Naive thymus-derived CD4-positive, alpha-beta T cell (primary cell): ENCODE measurements at regions of chr22 and their contacts with region 1.

Region 1: DNA sequence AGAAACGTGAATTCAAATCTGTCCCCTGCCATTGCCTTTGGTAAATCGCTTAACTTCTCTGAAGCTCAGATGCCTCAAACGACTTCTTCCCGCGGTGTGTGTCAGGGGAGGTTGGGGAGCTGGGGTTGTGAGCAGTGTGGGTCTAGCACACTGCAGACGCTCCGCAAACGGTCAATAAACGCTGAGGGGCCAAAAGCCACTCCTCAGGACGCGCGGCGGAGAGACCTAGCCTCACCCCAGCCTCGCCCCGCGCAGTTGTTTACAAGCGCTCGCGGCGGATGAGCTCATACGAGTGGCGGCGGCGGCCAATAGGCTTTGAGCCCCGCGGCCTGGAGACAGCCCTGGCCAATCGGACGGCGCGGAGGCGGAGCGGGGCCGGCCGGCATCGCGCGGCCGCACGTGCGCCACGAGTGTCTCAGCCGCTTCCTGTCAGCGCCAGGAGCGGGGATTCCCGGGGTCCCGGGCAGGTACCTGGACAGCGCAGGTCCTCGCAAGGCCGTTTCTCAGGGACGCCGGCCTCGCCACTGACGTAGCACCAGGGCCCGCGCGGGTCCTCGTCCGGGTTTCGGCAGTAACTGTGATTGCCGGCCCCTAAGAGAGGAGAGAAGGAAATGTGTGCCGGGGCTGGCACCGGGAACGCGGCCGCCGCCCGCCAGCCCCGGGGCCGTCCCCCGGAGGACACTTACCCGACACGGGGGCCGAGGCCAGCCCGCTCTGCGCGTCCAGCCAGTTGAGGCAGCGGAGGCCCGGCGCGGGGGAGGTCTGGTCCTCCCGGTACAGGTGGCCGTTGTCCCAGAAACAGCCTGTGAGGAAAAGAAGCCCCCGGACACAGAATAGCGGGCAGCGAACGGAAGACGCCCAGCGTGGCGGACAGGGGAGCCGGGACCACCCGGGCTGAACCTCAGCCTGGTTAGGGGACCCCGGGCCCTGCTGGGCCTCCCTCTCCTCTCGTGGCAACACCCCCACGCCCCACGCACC is 1.5 kb downstream of the PIK3IP1 start:
- DNase-seq: peak; percentile 94 to 98 (median 97)
- ATAC-seq: peak; percentile 86
- H3K4me3 ChIP-seq: peak overlapping the region; percentile 100
- H3K4me3 Mint-ChIP-seq: peak overlapping the region; percentile 92 to 100 (median 98)
- H3K27ac ChIP-seq: peak overlapping the region; percentile 100
- H3K27ac Mint-ChIP-seq: peak overlapping the region; percentile 98 to 100 (median 99)
- H3K4me1 ChIP-seq: peaks cover 53 to 54% of the 10 kb centered on the region in 2 donors
- H3K4me1 Mint-ChIP-seq: peaks cover 24 to 65% (median 60%) of the 10 kb centered on the region in 7 donors
- H3K27me3 ChIP-seq: no peaks in the 10 kb centered on the region
- H3K27me3 Mint-ChIP-seq: no peaks in the 10 kb centered on the region

Region 2: GRCh38 chr22:30930228-30930627 is 360.6 kb before region 1 on chr22:
- CTCF ChIA-PET with region 1: no interaction called
- POLR2A ChIA-PET with region 1: no interaction called
- intact Hi-C with region 1: no loop called
- DNase-seq: no peak
- ATAC-seq: no peak
- H3K4me3 ChIP-seq: no peak overlapping the region
- H3K4me3 Mint-ChIP-seq: no peak overlapping the region
- H3K27ac ChIP-seq: peak overlapping the region; percentile 23
- H3K27ac Mint-ChIP-seq: peak overlapping the region in 7 of 9 donors; percentile 46 to 93 (median 86)
- H3K4me1 ChIP-seq: peaks cover 0 to 11% of the 10 kb centered on the region in 2 donors
- H3K4me1 Mint-ChIP-seq: peaks cover 0 to 50% (median 41%) of the 10 kb centered on the region in 7 donors
- H3K27me3 ChIP-seq: no peaks in the 10 kb centered on the region
- H3K27me3 Mint-ChIP-seq: no peaks in the 10 kb centered on the region

Region 3: DNA sequence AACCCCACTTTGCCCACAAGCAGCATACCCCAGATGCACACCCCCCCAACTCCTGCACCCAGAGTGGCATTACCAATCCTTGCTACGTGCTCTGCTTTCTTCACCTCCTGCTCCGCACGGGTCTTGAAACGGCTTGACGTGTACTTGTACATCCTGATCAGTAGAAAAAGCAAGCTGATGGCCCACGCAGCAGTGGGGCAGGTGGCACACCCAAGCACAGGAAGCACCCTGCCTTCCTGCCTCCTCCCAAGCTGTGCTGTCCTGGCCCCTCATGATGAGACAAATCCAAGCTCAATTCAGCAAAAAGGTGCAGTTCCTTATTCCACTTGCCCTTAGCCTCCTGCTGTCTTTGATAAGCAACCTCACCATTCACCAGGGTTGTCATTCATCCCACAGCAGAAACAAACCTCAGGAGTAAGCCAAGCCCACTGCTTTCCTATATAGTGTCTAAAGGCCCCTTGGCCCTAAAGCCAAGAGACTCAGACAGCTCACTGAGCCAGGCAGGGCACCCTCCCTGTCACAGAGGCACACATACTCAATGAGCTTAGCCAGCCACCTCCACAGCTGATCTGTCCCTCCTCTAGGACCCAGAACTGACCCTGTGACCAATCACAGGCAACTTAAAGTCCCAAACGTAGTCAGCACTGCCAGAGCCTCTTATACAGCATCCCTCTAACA is 350.0 kb before region 1 on chr22:
- CTCF ChIA-PET with region 1: no interaction called
- POLR2A ChIA-PET with region 1: interaction called, 29 read pairs
- intact Hi-C with region 1: no loop called
- DNase-seq: peak in 7 of 9 donors; percentile 52 to 72 (median 64)
- ATAC-seq: peak; percentile 74
- H3K4me3 ChIP-seq: peak overlapping the region; percentile 67
- H3K4me3 Mint-ChIP-seq: peak overlapping the region; percentile 81 to 95 (median 88)
- H3K27ac ChIP-seq: peak overlapping the region; percentile 78
- H3K27ac Mint-ChIP-seq: peak overlapping the region; percentile 85 to 97 (median 94)
- H3K4me1 ChIP-seq: peaks cover 43 to 93% of the 10 kb centered on the region in 2 donors
- H3K4me1 Mint-ChIP-seq: peaks cover 53 to 97% (median 93%) of the 10 kb centered on the region in 7 donors
- H3K27me3 ChIP-seq: no peaks in the 10 kb centered on the region
- H3K27me3 Mint-ChIP-seq: no peaks in the 10 kb centered on the region

Region 4: GRCh38 chr22:31107178-31107893 is 183.4 kb before region 1 on chr22 and contains the start of gene SELENOM:
- CTCF ChIA-PET with region 1: no interaction called
- POLR2A ChIA-PET with region 1: interaction called, 10 read pairs
- intact Hi-C with region 1: loop called in 1 of 2 experiments (anchors 5 kb)
- DNase-seq: peak; percentile 73 to 89 (median 84)
- ATAC-seq: peak; percentile 98
- H3K4me3 ChIP-seq: peak within 1 kb of the TSS; percentile 94
- H3K4me3 Mint-ChIP-seq: peak within 1 kb of the TSS; percentile 88 to 98 (median 93)
- H3K27ac ChIP-seq: peak within 1 kb of the TSS; percentile 86
- H3K27ac Mint-ChIP-seq: peak within 1 kb of the TSS; percentile 81 to 96 (median 90)
- H3K4me1 ChIP-seq: peaks cover 8 to 16% of the 10 kb centered on the region in 2 donors
- H3K4me1 Mint-ChIP-seq: peaks cover 12 to 26% (median 20%) of the 10 kb centered on the region in 7 donors
- H3K27me3 ChIP-seq: no peaks in the 10 kb centered on the region
- H3K27me3 Mint-ChIP-seq: peaks cover 0 to 3% (median 0%) of the 10 kb centered on the region in 5 donors
- total RNA-seq, gene SELENOM: 9.1 to 71.5 (median 68.6) TPM

Region 5: DNA sequence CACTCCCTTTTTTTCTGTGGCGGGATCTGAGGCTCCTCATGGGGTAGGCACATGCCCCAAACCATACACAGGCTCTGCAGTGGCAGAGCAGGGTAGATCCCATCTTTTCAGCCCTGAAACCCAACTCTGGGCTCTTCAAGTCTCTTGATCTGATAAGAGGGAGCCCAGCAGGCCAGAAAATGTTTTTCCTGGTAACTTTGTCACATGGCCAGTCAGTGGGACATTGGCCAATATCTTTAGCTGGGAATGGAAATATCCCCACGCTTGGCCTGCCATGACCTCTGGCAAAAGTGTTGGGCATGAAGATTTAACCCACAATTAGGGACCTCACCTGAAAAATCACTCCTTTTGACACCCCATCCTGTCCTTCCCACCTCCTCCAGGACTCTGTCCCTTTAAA is 159.9 kb before region 1 on chr22:
- CTCF ChIA-PET with region 1: no interaction called
- POLR2A ChIA-PET with region 1: no interaction called
- intact Hi-C with region 1: no loop called
- DNase-seq: no peak
- ATAC-seq: no peak
- H3K4me3 ChIP-seq: no peak overlapping the region
- H3K4me3 Mint-ChIP-seq: no peak overlapping the region
- H3K27ac ChIP-seq: no peak overlapping the region
- H3K27ac Mint-ChIP-seq: no peak overlapping the region
- H3K4me1 ChIP-seq: no peaks in the 10 kb centered on the region
- H3K4me1 Mint-ChIP-seq: peaks cover 0 to 4% (median 0%) of the 10 kb centered on the region in 7 donors
- H3K27me3 ChIP-seq: no peaks in the 10 kb centered on the region
- H3K27me3 Mint-ChIP-seq: peaks cover 0 to 5% (median 0%) of the 10 kb centered on the region in 5 donors

Region 6: GRCh38 chr22:31218565-31219262 is 72.1 kb before region 1 on chr22:
- CTCF ChIA-PET with region 1: no interaction called
- POLR2A ChIA-PET with region 1: interaction called, 76 read pairs
- intact Hi-C with region 1: no loop called
- DNase-seq: peak in 1 of 9 donors; percentile 33
- ATAC-seq: no peak
- H3K4me3 ChIP-seq: no peak overlapping the region
- H3K4me3 Mint-ChIP-seq: peak overlapping the region in 7 of 10 donors; percentile 29 to 75 (median 45)
- H3K27ac ChIP-seq: peak overlapping the region; percentile 24
- H3K27ac Mint-ChIP-seq: peak overlapping the region; percentile 36 to 98 (median 86)
- H3K4me1 ChIP-seq: peaks cover 0 to 14% of the 10 kb centered on the region in 2 donors
- H3K4me1 Mint-ChIP-seq: peaks cover 45 to 76% (median 66%) of the 10 kb centered on the region in 7 donors
- H3K27me3 ChIP-seq: no peaks in the 10 kb centered on the region
- H3K27me3 Mint-ChIP-seq: no peaks in the 10 kb centered on the region

Region 7: GRCh38 chr22:31278622-31279326 is 12.0 kb before region 1 on chr22:
- CTCF ChIA-PET with region 1: interaction called, 73 read pairs
- POLR2A ChIA-PET with region 1: interaction called, 2,331 read pairs
- intact Hi-C with region 1: loop called (anchors 1 kb)
- DNase-seq: peak in 7 of 9 donors; percentile 67 to 85 (median 79)
- ATAC-seq: peak; percentile 75
- H3K4me3 ChIP-seq: peak overlapping the region; percentile 35
- H3K4me3 Mint-ChIP-seq: peak overlapping the region; percentile 74 to 97 (median 80)
- H3K27ac ChIP-seq: peak overlapping the region; percentile 100
- H3K27ac Mint-ChIP-seq: peak overlapping the region; percentile 96 to 100 (median 99)
- H3K4me1 ChIP-seq: peaks cover 33 to 94% of the 10 kb centered on the region in 2 donors
- H3K4me1 Mint-ChIP-seq: peaks cover 52 to 98% (median 94%) of the 10 kb centered on the region in 7 donors
- H3K27me3 ChIP-seq: no peaks in the 10 kb centered on the region
- H3K27me3 Mint-ChIP-seq: no peaks in the 10 kb centered on the region

Region 8: DNA sequence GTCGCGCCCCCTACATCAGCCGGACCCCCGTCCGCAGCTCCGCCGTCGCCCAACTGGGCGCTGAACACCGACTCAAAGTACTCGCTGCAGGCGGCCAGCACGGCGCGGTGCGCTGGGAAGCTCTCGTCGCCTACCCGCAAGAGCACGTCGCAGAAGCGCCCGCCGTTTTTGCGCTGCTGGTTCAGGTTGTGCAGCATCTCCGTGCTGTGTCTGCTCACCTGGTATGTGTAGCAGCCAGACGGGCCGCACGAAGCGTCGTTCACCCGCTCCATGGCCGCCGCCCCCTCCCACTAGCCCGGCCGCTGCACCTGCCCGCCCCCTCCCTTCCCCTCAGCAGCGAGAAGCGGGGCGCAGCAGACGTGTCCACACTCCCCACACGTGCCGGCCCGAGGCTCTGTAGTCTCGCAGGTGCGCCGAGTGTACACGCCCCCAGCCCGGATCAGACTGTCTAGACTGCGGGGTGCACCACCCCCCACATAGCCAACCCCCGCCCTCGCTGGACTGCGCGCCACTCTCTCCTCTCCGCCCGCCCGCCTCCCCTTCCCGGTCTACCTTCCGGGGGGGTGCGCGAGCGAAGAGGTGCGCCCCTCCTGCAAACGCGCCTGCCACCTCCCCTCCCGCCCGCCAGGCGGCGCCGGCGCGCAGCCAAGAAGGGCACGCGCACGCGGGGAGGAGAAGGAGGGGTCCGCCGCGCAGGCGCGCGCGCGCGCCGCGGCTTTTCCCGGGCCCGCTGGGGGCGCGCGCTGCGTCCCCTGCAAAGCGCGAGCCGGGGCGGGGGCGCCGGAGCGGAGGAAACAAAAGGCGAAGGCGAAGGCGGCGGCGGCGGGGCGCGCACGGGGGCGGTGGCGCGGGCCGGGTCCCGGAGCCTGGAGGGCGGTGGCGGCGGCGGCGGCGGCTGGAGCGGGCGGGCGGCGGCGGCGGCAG is 54.8 kb after region 1 on chr22:
- CTCF ChIA-PET with region 1: interaction called, 5 read pairs
- POLR2A ChIA-PET with region 1: interaction called, 109 read pairs
- intact Hi-C with region 1: loop called (anchors 1 kb)
- DNase-seq: peak; percentile 91 to 95 (median 93)
- ATAC-seq: peak; percentile 83
- H3K4me3 ChIP-seq: peak overlapping the region; percentile 60
- H3K4me3 Mint-ChIP-seq: peak overlapping the region; percentile 85 to 91 (median 88)
- H3K27ac ChIP-seq: peak overlapping the region; percentile 74
- H3K27ac Mint-ChIP-seq: peak overlapping the region; percentile 81 to 97 (median 92)
- H3K4me1 ChIP-seq: peaks cover 26 to 42% of the 10 kb centered on the region in 2 donors
- H3K4me1 Mint-ChIP-seq: peaks cover 32 to 57% (median 48%) of the 10 kb centered on the region in 7 donors
- H3K27me3 ChIP-seq: no peaks in the 10 kb centered on the region
- H3K27me3 Mint-ChIP-seq: peaks cover 0 to 4% (median 0%) of the 10 kb centered on the region in 5 donors

Region 9: DNA sequence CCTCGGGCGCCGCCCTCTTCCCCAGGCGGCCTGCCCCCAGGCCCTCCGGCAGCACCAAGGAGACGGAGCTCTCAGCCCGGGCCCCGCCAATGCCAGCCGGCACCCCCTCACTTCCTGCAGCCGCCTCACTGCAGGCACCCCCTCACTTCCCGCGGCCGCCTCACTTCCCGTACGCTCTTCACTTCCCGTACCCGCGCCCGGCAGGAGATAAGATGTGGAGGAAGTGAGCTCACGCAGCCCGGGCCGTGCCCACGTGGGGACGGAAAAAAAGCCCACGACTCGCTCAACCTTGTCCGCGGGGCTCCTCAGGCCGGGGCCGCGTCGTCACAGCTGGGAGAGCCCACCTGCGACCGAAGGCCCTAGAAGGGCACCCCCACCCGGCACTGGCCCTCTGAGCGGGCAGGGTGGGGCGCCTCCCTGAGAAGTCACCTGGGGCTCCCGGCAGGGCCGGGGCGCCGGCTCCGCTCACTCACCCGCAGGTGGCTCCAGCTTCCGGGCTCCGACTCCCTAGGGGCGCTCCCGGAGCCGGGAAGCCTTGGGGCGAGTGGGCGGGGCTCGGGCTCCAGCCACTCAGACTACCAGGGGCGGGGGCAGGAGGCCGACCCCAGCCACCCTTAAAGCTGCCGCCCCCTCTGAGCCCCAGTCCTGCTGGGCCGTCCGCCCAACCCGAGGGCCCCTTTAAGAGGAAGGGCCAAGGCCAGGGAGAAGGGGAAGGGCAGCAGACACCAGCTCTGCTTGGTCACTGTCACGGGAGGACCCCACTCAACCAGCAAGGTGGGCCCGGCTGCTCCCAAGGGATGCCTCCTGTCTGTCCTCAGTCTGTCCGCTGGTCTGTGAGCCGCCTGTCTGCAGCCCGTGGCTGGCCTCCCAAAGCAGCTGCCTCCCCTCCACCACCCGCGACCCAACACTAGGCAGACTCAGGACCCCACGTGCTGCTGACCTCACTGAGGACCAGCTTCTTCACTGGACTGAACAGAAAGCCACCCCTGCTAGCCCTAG is 339.8 kb after region 1 on chr22:
- CTCF ChIA-PET with region 1: no interaction called
- POLR2A ChIA-PET with region 1: interaction called, 7 read pairs
- intact Hi-C with region 1: loop called in 1 of 2 experiments (anchors 5 kb)
- DNase-seq: peak; percentile 71 to 90 (median 89)
- ATAC-seq: peak; percentile 92
- H3K4me3 ChIP-seq: peak overlapping the region; percentile 74
- H3K4me3 Mint-ChIP-seq: peak overlapping the region; percentile 80 to 92 (median 88)
- H3K27ac ChIP-seq: peak overlapping the region; percentile 95
- H3K27ac Mint-ChIP-seq: peak overlapping the region; percentile 89 to 96 (median 93)
- H3K4me1 ChIP-seq: peaks cover 16 to 19% of the 10 kb centered on the region in 2 donors
- H3K4me1 Mint-ChIP-seq: peaks cover 18 to 58% (median 38%) of the 10 kb centered on the region in 7 donors
- H3K27me3 ChIP-seq: no peaks in the 10 kb centered on the region
- H3K27me3 Mint-ChIP-seq: no peaks in the 10 kb centered on the region

Region 10: DNA sequence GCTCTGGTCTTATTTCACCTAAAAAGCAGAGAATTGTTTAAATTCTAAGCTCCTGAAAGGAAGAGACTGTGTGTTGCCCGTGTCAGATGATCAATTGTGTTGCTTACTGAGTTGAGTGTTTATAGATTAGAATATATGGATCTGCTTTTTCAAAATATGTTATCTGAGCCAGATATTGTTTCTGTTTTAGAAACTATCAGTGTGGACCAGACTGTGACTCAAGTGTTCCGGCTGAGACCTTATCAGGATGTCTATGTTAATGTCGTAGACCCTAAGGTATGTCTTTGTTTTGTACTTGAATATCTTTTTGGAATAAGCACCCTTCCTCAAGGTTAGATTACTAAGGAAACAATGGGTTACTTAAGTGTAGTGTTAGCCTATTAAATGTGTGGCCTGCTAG is 474.0 kb after region 1 on chr22:
- CTCF ChIA-PET with region 1: no interaction called
- POLR2A ChIA-PET with region 1: no interaction called
- intact Hi-C with region 1: no loop called
- DNase-seq: no peak
- ATAC-seq: no peak
- H3K4me3 ChIP-seq: no peak overlapping the region
- H3K4me3 Mint-ChIP-seq: no peak overlapping the region
- H3K27ac ChIP-seq: no peak overlapping the region
- H3K27ac Mint-ChIP-seq: no peak overlapping the region
- H3K4me1 ChIP-seq: no peaks in the 10 kb centered on the region
- H3K4me1 Mint-ChIP-seq: peaks cover 0 to 5% (median 0%) of the 10 kb centered on the region in 7 donors
- H3K27me3 ChIP-seq: no peaks in the 10 kb centered on the region
- H3K27me3 Mint-ChIP-seq: no peaks in the 10 kb centered on the region